PC-9 (cell line): ENCODE measurements at regions of chr2 and their contacts with region 1.

Region 1: GRCh38 chr2:173803449-173803848 is 161.7 kb downstream of the SP3 start:
- DNase-seq: no peak
- H3K4me3 ChIP-seq: no peak overlapping the region
- H3K27ac ChIP-seq: no peak overlapping the region
- H3K4me1 ChIP-seq: no peaks in the 10 kb centered on the region
- H3K27me3 ChIP-seq: peaks cover 46% of the 10 kb centered on the region
- CTCF ChIP-seq: no peak

Region 2: DNA sequence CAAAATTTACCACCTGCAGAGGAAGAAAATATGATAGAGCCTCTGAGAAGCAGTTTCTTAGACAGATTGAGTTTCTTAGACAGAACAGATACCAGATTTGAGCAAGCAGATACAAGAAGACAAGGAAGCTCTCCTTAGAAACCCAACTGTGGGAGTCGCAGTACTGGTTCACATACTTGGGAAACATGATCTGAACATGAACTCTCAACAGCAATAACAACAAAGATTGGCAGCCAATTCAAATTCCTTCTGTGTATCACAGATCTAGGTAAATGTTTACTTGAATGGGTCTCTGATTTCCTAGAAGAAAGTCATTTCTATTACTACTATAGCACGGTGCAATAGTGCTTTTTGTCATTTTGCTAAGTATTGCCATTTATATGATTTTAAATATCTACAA is 362.8 kb after region 1 on chr2:
- CTCF ChIA-PET with region 1: no interaction called
- POLR2A ChIA-PET with region 1: interaction called, 11 read pairs
- intact Hi-C with region 1: no loop called
- DNase-seq: no peak
- H3K4me3 ChIP-seq: no peak overlapping the region
- H3K27ac ChIP-seq: no peak overlapping the region
- H3K4me1 ChIP-seq: no peaks in the 10 kb centered on the region
- H3K27me3 ChIP-seq: no peaks in the 10 kb centered on the region
- CTCF ChIP-seq: no peak